ENCODE measurements at regions of chr6 and their contacts with region 1.

Region 1: DNA sequence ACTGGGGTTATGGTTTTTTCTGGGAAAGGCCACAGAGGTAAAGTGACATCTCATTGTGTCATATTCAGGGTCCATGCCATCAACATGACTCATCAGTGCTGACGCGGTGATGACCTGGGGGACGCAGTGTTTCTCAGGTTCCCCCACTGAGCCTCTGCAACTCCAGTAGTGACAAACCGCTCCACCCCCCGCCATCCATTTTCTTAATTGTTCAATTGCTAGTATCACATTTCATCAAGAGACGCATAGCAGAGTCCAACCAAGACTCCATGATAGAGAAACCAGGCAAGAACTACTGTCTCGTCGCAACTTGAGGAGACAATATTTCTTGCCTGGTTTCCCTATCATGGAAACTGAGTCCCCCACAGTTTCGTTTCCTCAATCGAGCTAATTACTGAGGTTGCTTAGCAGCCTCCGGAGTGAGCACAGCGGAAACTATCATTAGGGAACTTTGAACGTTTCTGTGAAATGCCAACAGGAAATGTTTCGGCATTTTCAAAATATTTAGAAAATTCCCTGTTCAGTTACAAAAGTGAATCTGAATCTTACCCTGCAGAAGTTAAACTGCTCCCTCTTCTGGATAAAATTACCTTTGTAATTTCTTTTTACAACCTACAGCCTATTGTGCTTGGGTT is 12.2 kb upstream of the SERPINB1 start:
- DNase-seq: no peak
- ATAC-seq: peak; percentile 60

Region 2: GRCh38 chr6:2921520-2922115 is 67.7 kb after region 1 on chr6:
- intact Hi-C with region 1: loop called in 1 of 2 experiments (anchors 10 kb)
- DNase-seq: no peak
- ATAC-seq: no peak

Region 3: GRCh38 chr6:3194535-3195419 is 340.9 kb after region 1 on chr6:
- intact Hi-C with region 1: no loop called
- DNase-seq: no peak
- ATAC-seq: no peak

Measured in left colon (tissue), 2 donors.